ENCODE measurements at regions of chr16 and their contacts with region 1.

Region 1: DNA sequence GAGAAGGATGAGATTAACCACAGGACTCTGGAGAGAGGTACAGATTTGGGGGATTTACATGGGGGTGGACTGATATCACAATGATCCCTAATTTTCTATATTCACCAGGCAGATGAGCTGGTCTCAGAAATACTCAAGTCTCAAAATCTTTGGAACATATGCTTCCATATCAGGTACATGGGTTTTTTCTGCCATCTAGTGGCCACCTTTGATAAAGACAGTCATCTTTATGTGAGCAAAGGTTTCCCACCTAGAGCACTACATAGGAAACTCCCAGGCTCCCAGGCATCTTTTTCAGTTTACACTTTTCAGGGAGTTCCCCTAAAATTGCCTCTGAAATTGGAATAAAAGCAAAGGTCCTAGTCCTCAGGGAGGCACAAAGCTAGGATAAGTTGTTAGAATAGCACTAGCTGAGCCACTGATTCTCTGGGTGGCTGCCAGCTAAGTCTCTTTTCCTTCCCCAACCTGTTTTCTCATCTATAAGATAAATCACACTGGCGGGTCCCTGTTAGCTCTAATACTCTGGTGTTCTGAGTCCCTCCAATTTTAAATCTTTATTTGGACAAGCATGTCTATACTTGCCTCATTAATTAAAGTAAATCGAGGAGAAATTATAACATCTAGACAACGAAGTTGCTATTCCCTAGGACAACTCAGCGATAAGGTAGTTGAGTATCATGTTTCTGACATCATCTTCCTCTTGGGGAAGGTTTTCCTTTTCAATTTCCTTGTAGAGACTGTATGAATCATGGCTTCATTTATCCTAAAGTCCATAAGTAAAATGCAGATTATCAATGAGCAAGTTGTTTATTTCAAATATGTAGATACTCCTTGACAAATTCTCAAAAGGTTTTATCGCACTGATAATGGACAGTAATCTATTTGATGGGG is 19.0 kb upstream of the MON1B start:
- DNase-seq: peak; percentile 47
- H3K4me3 ChIP-seq: no peak overlapping the region; a peak in 1 of 4 replicates
- H3K27ac ChIP-seq: no peak overlapping the region
- H3K4me1 ChIP-seq: no peaks in the 10 kb centered on the region
- H3K27me3 ChIP-seq: no peaks in the 10 kb centered on the region
- CTCF ChIP-seq: peak; percentile 80
- EP300 ChIP-seq: no peak
- RAD21 ChIP-seq: peak; percentile 90

Region 2: GRCh38 chr16:75781683-75782343 is 1390.2 kb before region 1 on chr16:
- CTCF ChIA-PET with region 1: interaction called, 44 read pairs
- POLR2A ChIA-PET with region 1: no interaction called
- DNase-seq: no peak
- H3K4me3 ChIP-seq: no peak overlapping the region
- H3K27ac ChIP-seq: no peak overlapping the region
- H3K4me1 ChIP-seq: no peaks in the 10 kb centered on the region
- H3K27me3 ChIP-seq: no peaks in the 10 kb centered on the region
- CTCF ChIP-seq: no peak
- EP300 ChIP-seq: no peak
- RAD21 ChIP-seq: no peak

Region 3: DNA sequence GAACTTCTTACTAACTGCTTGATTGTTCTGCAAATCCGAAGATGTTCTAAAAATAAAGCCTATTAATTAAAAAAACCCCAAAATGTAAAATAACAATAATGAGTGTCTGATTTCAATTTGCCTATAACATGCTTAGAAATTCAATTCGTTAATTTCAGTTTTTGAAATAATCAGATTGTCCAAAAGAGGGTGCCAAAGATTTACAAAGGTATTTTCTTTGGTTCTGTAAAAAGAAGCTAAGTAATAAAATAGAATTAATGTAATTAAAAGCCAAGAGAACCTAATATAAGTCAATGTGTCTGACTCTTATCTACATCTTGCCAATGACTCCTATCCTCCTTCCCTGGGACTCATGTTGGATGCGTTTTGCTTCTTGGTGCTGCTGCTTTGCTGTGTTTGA is 1370.7 kb before region 1 on chr16:
- CTCF ChIA-PET with region 1: interaction called, 57 read pairs
- POLR2A ChIA-PET with region 1: no interaction called
- DNase-seq: no peak
- H3K4me3 ChIP-seq: no peak overlapping the region
- H3K27ac ChIP-seq: no peak overlapping the region
- H3K4me1 ChIP-seq: no peaks in the 10 kb centered on the region
- H3K27me3 ChIP-seq: no peaks in the 10 kb centered on the region
- CTCF ChIP-seq: peak; percentile 41
- EP300 ChIP-seq: no peak
- RAD21 ChIP-seq: peak; percentile 57

Region 4: DNA sequence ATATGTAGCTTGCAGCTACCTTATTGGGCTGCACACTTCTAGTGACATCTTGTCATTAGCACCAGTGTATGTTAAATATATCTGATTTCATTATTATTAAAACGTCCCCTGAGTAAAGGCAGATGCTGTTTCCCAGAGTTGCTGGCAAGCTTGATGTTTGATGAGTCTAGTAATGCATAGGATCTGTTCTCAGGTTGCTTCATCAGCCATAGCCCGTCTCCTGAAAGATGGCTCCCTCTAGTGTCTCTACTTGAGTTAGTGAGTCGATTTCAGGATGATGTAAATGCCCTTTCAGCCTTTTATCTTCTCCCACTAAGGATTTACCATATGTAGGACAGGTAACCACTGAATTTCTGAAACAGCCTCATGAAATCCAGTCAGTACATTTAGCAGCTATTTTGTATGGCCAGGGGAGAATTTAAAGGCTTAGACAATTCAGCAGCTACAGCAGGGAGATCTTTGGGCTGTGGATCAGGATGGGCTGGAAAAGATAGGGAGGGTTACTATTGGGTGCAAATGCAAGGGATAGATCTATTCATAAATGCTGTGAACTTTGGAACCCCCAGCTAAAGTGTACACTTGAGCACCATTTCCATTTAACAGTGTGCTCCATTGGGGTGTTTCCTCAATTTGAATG is 518.5 kb before region 1 on chr16:
- CTCF ChIA-PET with region 1: interaction called, 59 read pairs
- POLR2A ChIA-PET with region 1: no interaction called
- DNase-seq: peak; percentile 39
- H3K4me3 ChIP-seq: no peak overlapping the region; a peak in 1 of 4 replicates
- H3K27ac ChIP-seq: peak overlapping the region in 1 of 2 experiments; percentile 28; a peak in 1 of 4 replicates
- H3K4me1 ChIP-seq: peaks cover 0 to 16% of the 10 kb centered on the region in 2 experiments; a peak in 2 of 4 replicates
- H3K27me3 ChIP-seq: no peaks in the 10 kb centered on the region
- CTCF ChIP-seq: peak; percentile 64
- EP300 ChIP-seq: peak in 1 of 2 experiments; percentile 67; a peak in 2 of 4 replicates
- RAD21 ChIP-seq: peak; percentile 94

Region 5: GRCh38 chr16:77028655-77029054 is 143.3 kb before region 1 on chr16:
- CTCF ChIA-PET with region 1: no interaction called
- POLR2A ChIA-PET with region 1: no interaction called
- DNase-seq: no peak
- H3K4me3 ChIP-seq: no peak overlapping the region
- H3K27ac ChIP-seq: no peak overlapping the region
- H3K4me1 ChIP-seq: no peaks in the 10 kb centered on the region; a peak in 1 of 4 replicates
- H3K27me3 ChIP-seq: no peaks in the 10 kb centered on the region
- CTCF ChIP-seq: no peak
- EP300 ChIP-seq: no peak
- RAD21 ChIP-seq: no peak

Region 6: DNA sequence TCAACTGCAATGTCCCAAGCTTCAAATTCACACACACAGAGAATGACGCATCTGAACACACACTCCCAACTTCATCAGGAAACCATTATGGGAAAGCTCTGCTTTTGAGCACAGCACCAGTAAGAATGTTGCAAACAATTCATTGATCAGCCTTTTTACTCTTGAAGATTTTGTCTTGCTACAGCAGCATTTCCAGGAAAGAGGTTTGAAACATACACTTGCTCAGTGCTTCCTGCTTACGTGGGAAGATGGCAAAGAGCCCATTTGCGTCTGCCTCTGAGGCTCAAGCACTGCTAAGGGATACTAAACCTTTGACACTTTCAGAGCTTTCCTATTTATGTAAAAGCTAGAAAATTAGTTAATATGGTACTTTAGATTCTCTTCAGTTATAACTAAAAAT is 58.2 kb before region 1 on chr16:
- CTCF ChIA-PET with region 1: interaction called, 10 read pairs
- POLR2A ChIA-PET with region 1: no interaction called
- DNase-seq: no peak
- H3K4me3 ChIP-seq: no peak overlapping the region
- H3K27ac ChIP-seq: no peak overlapping the region
- H3K4me1 ChIP-seq: peaks cover 0 to 3% of the 10 kb centered on the region in 2 experiments; a peak in 2 of 4 replicates
- H3K27me3 ChIP-seq: no peaks in the 10 kb centered on the region
- CTCF ChIP-seq: no peak
- EP300 ChIP-seq: no peak
- RAD21 ChIP-seq: no peak

Region 7: GRCh38 chr16:77183137-77183536 is 11.1 kb after region 1 on chr16:
- CTCF ChIA-PET with region 1: interaction called, 15 read pairs
- POLR2A ChIA-PET with region 1: no interaction called
- DNase-seq: no peak
- H3K4me3 ChIP-seq: no peak overlapping the region
- H3K27ac ChIP-seq: no peak overlapping the region
- H3K4me1 ChIP-seq: no peaks in the 10 kb centered on the region
- H3K27me3 ChIP-seq: no peaks in the 10 kb centered on the region
- CTCF ChIP-seq: no peak
- EP300 ChIP-seq: no peak
- RAD21 ChIP-seq: no peak

Measured in SK-N-SH (cell line).